ENCODE measurements at regions of chr11 and their contacts with region 1.

Region 1: GRCh38 chr11:57249384-57250319 is 12.6 kb upstream of the APLNR start:
- H3K4me3 Mint-ChIP-seq: no peak overlapping the region
- H3K27ac Mint-ChIP-seq: no peak overlapping the region
- H3K4me1 Mint-ChIP-seq: no peaks in the 10 kb centered on the region
- H3K27me3 Mint-ChIP-seq: peaks cover 21% of the 10 kb centered on the region

Region 2: GRCh38 chr11:56841210-56841810 is 408.3 kb before region 1 on chr11:
- intact Hi-C with region 1: loop called (anchors 1 kb)
- H3K4me3 Mint-ChIP-seq: no peak overlapping the region
- H3K27ac Mint-ChIP-seq: no peak overlapping the region
- H3K4me1 Mint-ChIP-seq: no peaks in the 10 kb centered on the region
- H3K27me3 Mint-ChIP-seq: no peaks in the 10 kb centered on the region

Region 3: DNA sequence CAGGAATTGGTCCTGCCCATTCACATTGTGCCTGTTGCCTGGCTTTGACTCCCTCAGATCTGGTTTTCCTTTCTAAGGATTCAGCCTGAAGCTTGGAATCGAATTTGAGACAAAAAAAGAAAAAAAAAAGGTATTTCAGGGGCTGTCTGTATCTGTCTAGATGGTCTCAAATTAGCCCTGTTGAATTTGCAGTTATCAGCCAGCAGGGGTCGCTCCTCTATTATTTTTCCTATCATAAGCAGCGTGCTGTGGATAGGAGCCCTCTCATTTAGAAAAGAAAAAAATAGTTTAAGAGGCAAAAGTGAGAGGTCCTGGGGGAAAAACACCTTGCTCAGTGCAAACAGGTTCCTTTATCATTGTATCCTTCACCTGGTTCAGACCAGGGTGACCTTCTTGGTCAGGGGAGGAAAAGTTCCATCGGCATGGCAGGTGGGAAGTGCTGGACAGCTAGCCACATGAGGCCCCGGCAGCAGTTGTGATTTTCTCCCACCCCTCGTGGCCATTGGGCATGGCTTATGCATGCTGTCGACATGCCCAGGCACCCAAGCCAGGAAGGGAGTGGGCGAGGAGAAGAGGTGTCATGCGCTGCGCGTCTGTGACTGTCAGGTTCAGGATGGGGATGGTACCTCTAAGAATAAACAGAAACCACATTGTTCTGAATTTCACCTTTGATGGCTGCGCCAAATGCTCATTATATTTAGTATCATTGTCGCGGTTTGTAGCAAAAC is 247.8 kb before region 1 on chr11:
- intact Hi-C with region 1: loop called (anchors 5 kb)
- H3K4me3 Mint-ChIP-seq: no peak overlapping the region
- H3K27ac Mint-ChIP-seq: no peak overlapping the region
- H3K4me1 Mint-ChIP-seq: no peaks in the 10 kb centered on the region
- H3K27me3 Mint-ChIP-seq: no peaks in the 10 kb centered on the region

Region 4: DNA sequence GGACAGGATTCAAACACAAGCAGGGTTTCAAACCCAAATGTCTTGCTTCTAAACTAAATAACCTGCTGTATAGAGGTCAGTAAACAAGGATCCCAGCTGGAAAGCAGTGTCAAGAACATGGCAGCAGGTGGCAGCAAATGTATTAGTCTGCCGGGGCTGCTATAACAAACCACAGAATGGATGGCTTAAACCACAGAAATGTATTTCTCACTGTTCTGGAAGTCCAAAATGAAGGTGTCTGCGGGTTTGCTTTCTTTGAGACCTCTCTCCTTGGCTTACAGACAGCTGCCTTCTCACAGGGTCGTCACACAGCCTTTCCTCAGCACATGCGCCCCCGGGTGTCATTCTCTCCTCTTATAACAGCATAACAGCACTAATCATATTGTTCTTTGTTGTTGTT is 133.0 kb before region 1 on chr11:
- intact Hi-C with region 1: loop called (anchors 1 kb)
- H3K4me3 Mint-ChIP-seq: no peak overlapping the region
- H3K27ac Mint-ChIP-seq: no peak overlapping the region
- H3K4me1 Mint-ChIP-seq: no peaks in the 10 kb centered on the region
- H3K27me3 Mint-ChIP-seq: peaks cover 8% of the 10 kb centered on the region